ENCODE measurements at regions of chr10 and their contacts with region 1.

Region 1: GRCh38 chr10:48215488-48216204 is 58.9 kb downstream of the FRMPD2 start:
- DNase-seq: no peak
- ATAC-seq: no peak
- H3K4me3 ChIP-seq: no peak overlapping the region
- H3K27ac ChIP-seq: no peak overlapping the region
- H3K4me1 ChIP-seq: no peaks in the 10 kb centered on the region
- H3K27me3 ChIP-seq: peaks cover 0 to 3% (median 0%) of the 10 kb centered on the region in 3 donors
- CTCF ChIP-seq: peak in 1 of 5 experiments; percentile 36
- POLR2A ChIP-seq: no peak

Region 2: DNA sequence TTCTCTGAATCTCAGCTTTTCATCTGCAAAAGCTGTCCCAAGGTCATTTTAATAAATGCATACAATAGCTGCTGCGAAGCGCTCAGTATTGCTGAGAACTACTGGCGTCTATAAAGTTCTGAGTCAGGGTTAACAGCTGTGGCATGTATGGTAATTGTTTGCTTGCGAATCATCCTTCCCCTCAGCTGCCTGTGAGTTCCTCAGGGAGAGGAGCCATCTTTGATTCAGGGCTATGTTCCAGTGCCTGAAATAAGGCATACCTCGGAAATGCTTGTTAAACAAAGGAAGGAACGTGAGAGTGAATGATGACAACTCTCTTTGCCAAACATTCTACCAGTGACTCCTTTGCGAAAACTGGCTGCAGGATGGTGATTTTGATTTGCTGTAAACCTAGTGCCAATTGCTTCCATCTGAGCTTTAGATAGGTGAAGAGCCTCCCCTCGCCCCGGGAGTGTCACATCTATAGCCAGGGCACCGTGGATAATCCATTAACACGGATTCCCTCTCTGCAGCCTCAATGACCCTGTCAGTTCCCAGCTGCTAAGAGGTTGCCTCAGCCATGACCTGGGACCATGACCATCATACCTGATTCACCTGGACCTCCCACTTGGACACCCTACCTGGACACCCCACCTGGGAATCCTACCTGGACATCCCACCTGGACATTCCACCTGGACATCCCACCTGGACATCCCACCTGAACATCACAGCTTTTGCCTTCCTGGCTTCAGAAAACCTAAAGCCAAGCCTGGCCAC is 1698.8 kb before region 1 on chr10:
- in situ Hi-C with region 1: loop called in 1 of 4 experiments (anchors 25 kb)
- intact Hi-C with region 1: no loop called
- DNase-seq: no peak
- ATAC-seq: no peak
- H3K4me3 ChIP-seq: no peak overlapping the region
- H3K27ac ChIP-seq: no peak overlapping the region
- H3K4me1 ChIP-seq: no peaks in the 10 kb centered on the region
- H3K27me3 ChIP-seq: peaks cover 5 to 7% (median 5%) of the 10 kb centered on the region in 3 donors
- CTCF ChIP-seq: no peak
- POLR2A ChIP-seq: no peak

Region 3: GRCh38 chr10:48336978-48337599 is 121.4 kb after region 1 on chr10:
- in situ Hi-C with region 1: no loop called
- intact Hi-C with region 1: no loop called
- DNase-seq: no peak
- ATAC-seq: no peak
- H3K4me3 ChIP-seq: no peak overlapping the region
- H3K27ac ChIP-seq: no peak overlapping the region
- H3K4me1 ChIP-seq: peaks cover 31 to 40% of the 10 kb centered on the region in 2 donors
- H3K27me3 ChIP-seq: no peaks in the 10 kb centered on the region
- CTCF ChIP-seq: no peak
- POLR2A ChIP-seq: no peak

Measured in gastrocnemius medialis (tissue), 4 donors.